ENCODE measurements at regions of chr16 and their contacts with region 1.

Region 1: DNA sequence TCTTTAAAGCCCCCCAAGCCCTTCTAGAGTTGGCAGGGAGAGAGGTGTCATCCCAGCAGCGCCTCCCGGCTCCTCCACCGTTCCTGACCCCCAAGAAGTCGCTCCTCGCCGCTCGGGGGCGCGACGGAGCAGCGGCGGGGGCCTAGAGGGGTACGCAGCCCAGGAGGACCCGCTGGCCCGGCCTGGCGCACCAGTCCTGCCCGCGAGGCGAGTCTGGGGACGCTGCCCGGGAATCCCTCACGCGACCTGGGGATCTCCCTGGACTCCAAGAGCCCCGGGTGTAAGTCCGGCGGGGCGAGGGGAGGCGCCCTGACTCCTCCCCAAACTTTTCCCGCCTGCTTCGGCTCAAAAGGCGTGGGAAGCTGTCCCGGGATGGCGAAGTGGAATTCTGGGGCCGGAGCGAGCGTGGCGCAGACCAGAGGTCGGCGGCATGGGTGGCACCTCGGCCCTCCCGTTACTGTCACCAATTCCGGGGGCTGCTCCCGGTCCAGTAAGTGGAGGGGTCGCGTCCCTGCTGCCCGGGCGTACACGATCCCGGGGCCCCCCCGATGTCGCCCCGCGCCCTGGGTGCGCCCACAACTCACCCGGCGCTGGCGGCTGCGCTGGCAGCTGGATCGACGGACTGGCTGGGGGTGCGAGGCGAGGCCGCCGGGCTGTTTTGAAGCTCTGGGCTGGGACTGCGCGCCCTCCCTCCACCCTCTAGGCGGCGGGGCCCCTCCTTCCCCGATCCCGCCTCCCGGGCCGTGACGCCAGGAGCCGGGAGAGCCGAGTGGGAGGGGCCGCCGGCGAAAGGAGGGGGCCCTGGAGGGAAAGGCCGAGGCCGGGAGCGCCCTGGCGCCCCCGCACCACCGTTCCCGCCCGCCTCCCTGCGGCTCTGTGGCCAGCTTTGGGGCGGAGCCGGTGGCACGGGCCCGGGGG is at the start of gene EMP2:
- DNase-seq: peak; percentile 43 to 90
- H3K4me3 ChIP-seq: peak within 1 kb of the TSS; percentile 72 to 90
- H3K27ac ChIP-seq: peak within 1 kb of the TSS; percentile 87 to 97
- H3K4me1 ChIP-seq: peaks cover 6 to 42% of the 10 kb centered on the region in 2 donors
- H3K27me3 ChIP-seq: no peaks in the 10 kb centered on the region
- CTCF ChIP-seq: peak; percentile 45 to 72 (median 54)
- total RNA-seq, gene EMP2: 49.2 TPM

Region 2: DNA sequence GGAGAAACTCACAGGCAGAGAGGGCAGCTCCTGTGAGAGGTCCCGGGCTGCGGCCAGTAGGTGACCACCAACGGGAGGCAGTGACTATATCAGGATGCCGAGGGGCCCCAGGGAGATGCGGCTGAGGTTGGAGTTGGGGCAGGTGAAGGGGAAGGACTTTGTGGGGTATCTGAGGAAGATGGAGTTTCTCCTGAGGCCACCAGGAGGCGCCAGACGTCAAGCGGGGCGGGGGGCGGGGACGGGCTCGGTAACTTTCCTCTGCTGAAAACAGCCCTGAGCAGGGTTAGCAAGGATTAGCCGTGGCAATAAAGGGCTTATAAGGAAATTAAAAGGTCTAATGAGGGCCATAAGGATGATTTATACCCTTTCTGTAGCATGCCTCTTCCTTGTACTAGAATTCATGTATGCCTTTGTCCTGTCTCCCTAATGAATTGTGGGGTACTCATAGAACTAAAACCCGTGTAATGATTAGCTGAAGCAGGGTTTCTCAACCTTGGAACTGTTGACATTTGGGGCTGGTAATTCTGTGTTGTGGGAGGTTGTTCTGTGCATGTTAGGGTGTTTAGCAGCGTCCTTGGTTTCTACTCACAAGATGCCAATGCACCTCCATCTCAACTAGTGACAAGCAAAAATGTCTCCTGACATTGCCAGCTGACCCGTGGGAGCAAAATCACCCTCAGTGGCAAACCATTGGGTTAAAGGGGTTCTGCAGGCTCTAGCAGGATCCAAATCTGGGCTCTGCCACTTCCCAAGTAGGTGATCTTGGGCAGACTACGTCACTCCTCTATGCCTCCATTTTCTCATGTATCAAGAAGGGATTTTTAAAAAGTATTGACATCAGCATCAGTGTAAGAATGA is 323.2 kb before region 1 on chr16:
- intact Hi-C with region 1: loop called (anchors 10 kb)
- DNase-seq: no peak
- H3K4me3 ChIP-seq: no peak overlapping the region
- H3K27ac ChIP-seq: no peak overlapping the region
- H3K4me1 ChIP-seq: no peaks in the 10 kb centered on the region
- H3K27me3 ChIP-seq: no peaks in the 10 kb centered on the region
- CTCF ChIP-seq: peak; percentile 38 to 85 (median 77)

Region 3: GRCh38 chr16:10509534-10510025 is 70.6 kb before region 1 on chr16:
- intact Hi-C with region 1: loop called (anchors 2 kb)
- DNase-seq: no peak
- H3K4me3 ChIP-seq: no peak overlapping the region
- H3K27ac ChIP-seq: no peak overlapping the region
- H3K4me1 ChIP-seq: peaks cover 4 to 6% of the 10 kb centered on the region in 2 donors
- H3K27me3 ChIP-seq: no peaks in the 10 kb centered on the region
- CTCF ChIP-seq: peak; percentile 63 to 79 (median 72)

Region 4: DNA sequence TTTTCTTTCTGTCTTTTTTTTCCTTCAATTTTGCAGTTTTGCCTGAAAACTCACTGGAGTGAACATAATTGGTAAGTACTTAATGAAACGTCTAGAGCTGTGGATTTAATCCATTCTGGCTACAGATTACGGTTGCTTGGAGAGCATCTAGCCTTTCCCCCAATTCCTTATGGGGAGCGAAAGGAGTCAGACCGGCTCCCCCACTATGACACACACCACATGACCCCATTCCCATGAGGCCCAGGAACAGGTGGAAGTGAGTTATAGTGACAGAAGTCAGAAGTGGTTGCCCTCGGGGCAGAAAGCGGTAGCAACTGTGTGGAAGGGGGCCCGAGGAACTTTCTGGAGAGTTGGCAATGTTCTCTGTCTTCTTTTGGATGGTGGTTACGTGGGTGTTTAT is 41.0 kb before region 1 on chr16:
- intact Hi-C with region 1: no loop called
- DNase-seq: no peak
- H3K4me3 ChIP-seq: no peak overlapping the region
- H3K27ac ChIP-seq: no peak overlapping the region
- H3K4me1 ChIP-seq: no peaks in the 10 kb centered on the region
- H3K27me3 ChIP-seq: no peaks in the 10 kb centered on the region
- CTCF ChIP-seq: no peak

Region 5: DNA sequence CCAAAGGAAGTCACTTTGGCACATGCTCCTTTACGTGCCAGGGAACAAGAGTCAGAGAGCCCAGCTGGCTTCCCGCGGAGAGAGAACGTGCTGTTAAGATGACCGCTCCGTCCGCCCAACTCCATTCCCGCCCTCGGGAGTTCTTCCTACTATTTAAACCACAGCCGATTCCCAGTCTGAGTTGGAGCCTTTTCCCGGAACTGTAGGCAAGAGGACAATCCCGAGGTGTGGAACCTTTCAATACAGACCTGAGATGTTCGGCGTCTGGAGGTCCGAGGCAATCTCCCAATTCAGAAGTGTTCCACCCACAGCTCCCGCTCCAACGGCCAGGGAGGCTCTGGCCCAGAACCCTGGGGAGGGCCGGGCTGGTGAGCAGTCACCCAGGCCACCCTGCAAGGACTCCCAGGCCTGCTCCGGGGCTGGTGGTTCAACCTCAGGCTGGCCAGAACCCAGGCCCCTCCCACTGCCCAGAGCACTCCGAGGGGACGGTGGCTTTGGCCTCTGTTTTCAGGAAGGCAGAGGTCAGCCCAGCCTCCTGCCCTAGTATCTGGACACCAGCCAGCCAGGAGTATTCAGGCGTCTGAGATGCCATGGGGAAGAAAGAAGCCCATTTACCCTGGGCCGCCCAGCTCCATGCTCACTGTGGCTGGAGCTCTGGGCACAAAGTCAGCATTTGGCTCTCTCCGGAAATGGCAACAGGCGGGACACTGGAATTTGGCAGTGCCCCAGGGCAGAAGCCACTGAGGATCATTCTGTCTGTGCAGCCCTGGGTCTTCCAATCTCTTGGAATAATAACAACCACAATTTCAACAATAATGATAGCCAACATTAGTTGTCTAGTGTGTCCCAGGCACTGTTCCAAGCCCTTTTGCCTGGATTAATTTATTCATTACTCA is 21.2 kb before region 1 on chr16:
- intact Hi-C with region 1: loop called (anchors 1 kb)
- DNase-seq: peak; percentile 46 to 88
- H3K4me3 ChIP-seq: peak overlapping the region; percentile 27 to 37
- H3K27ac ChIP-seq: peak overlapping the region; percentile 79 to 93
- H3K4me1 ChIP-seq: peaks cover 12 to 54% of the 10 kb centered on the region in 2 donors
- H3K27me3 ChIP-seq: no peaks in the 10 kb centered on the region
- CTCF ChIP-seq: no peak

Region 6: DNA sequence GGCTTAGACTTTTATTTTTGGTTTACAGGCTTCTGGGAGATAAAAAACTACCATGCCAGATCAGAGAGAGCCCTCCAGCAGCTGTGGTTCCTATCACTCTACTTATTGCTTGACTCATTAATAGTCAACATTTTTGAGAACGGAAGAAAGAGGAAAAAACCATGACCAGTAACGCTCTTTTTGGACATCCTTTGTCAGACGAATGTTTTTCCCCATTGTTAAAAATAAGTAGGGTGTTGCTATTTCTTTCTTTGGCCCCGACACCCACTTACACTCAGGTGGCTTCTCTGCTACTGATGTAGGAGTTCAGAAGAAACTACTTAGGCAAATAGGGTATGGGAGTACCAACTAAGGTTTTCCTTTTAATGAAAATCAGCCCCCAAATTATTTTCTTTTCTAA is 210.8 kb after region 1 on chr16:
- intact Hi-C with region 1: no loop called
- DNase-seq: no peak
- H3K4me3 ChIP-seq: no peak overlapping the region
- H3K27ac ChIP-seq: no peak overlapping the region
- H3K4me1 ChIP-seq: no peaks in the 10 kb centered on the region
- H3K27me3 ChIP-seq: no peaks in the 10 kb centered on the region
- CTCF ChIP-seq: no peak

Region 7: DNA sequence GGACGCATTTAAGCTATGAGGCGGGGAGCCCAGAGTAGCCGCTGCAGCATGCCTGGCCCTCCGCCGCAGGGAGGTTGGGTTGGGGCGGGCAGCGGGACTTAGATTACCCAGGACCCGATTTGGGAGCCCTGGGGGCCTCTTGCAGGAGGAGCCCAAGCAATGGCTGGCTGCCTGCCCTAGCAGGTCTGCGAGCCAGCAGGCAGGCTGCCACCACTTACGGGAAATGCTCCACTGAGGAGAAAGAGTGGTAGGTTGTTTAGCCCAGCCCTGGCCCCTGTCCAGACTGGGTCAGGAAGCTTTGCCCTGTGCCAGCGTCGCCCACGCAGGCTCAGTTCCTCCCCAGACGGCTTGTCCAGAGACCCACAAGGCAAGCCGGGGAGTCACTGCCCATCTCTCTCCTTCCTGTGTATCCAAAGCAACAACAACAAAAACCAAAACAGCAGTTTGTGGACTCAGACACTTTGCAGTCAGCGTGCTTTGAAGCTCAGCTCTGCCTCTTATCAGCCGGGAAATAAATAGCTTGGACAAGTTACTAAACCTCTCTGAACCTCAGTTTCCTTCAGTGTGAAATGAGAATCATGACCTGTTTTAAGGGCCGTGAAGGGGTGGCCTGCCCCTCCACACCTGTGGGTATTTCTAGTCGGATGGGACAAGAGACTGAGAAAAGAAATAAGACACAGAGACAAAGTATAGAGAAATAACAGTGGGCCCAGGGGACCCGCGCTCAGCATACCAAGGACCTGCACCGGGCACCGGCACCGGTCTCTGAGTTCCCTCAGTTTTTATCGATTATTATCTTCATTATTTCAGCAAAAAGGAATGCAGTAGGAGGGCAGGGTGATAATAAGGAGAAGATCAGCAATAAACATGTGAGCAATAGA is 248.9 kb after region 1 on chr16:
- intact Hi-C with region 1: loop called (anchors 5 kb)
- DNase-seq: peak; percentile 79 to 98
- H3K4me3 ChIP-seq: peak overlapping the region in 1 of 2 donors; percentile 30
- H3K27ac ChIP-seq: peak overlapping the region; percentile 93 to 99
- H3K4me1 ChIP-seq: peaks cover 10 to 25% of the 10 kb centered on the region in 2 donors
- H3K27me3 ChIP-seq: no peaks in the 10 kb centered on the region
- CTCF ChIP-seq: no peak

Region 8: DNA sequence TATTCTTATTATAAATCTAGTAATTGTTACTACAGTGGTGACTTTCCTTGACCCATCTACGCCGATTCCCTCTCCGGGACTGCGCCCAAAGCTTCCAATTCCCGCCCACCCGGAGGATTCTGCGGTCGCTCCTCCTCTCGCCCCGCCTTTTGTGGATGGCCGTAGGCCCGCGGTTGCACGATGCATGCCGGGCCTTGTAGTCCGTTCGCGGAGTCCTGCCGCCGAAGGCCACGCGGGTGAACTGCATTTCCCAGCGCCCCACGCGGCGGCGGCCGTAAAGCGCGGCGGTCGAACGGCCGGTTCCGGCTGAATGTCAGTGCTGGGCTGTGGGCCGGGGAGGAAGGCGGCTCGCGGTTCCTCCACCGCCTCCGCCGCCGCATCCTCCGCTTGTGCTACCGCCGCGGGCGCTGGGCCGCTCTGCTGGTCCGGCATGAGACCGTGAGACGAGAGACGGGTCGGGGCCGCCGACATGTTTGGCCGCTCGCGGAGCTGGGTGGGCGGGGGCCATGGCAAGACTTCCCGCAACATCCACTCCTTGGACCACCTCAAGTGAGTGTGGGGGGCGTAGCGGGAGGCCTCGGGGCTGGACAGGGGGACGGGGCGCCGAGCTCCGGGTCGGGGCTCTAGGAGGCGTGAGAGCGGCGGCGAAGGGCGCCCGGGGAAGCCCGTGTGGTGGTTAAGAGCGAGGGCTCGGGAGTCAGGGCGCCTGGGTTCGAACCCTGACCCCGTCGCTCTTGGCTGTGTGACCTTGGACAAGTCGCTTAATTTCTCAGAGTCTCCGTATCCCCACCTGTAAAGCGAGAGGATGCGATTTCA is 364.2 kb after region 1 on chr16 and contains the start of gene CLEC16A:
- intact Hi-C with region 1: loop called (anchors 2 kb)
- DNase-seq: peak; percentile 93 to 99
- H3K4me3 ChIP-seq: peak within 1 kb of the TSS; percentile 98
- H3K27ac ChIP-seq: peak within 1 kb of the TSS; percentile 85 to 86
- H3K4me1 ChIP-seq: peaks cover 20 to 49% of the 10 kb centered on the region in 2 donors
- H3K27me3 ChIP-seq: no peaks in the 10 kb centered on the region
- CTCF ChIP-seq: no peak
- total RNA-seq, gene CLEC16A: 16.2 TPM